Head of caudate nucleus (tissue), 42 donors: ENCODE measurements at regions of chr18 and their contacts with region 1.

Region 1: DNA sequence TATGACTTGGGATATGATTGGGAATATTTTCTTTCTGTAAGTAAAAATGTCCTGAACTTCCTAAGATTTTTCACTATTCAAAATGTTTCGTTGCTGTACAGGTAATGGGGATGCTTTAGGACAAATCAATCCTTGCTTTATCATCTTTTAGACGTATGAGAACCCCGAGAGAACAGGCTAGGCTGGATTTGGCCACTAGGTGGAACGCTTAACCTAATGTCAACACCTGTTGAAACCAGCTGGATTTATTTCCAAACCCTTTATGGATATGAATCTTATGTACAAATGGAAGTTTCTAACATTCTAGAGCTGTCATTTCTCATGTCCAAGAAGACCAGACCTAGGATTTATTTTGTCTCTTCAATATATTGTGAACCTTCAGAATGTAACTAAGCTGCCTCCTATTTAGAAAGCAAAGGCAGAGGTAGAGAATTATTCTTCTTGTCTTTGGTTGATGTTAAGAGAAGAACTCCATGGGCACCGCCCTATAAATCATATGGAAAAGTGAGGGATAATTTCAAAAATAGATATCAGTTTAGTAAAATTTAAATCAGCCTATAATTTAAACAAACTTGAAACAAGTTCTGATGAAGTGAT is 96.7 kb downstream of the PMAIP1 start:
- DNase-seq: peak in 37 of 42 donors; percentile 7 to 80 (median 53)

Region 2: DNA sequence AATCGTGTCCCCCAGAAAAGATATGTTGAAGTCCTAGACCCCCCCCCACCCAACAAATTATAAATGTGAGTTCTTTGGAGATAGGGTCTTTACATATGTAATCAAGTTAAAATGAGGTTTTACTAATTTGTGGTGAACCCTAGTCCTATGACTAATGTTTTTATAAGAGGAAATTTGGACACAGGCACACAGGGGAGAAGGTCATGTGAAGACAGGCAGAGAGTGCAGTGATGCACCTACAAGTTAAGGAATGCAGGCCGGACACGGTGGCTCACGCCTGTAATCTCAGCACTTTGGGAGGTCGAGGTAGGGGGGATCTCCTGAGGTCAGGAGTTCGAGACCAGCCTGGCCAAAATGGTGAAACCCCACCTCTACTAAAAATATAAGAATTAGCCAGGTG is 102.5 kb before region 1 on chr18:
- intact Hi-C with region 1: no loop called
- DNase-seq: no peak

Region 3: GRCh38 chr18:60554967-60555366 is 558.5 kb after region 1 on chr18:
- intact Hi-C with region 1: loop called (anchors 5 kb)
- DNase-seq: peak in 1 of 42 donors; percentile 35